Gastrocnemius medialis (tissue), 4 donors: ENCODE measurements at regions of chr14 and their contacts with region 1.

Region 1: GRCh38 chr14:101964297-101965144 is at the start of gene DYNC1H1:
- DNase-seq: peak; percentile 82 to 92
- ATAC-seq: peak; percentile 82 to 86
- H3K4me3 ChIP-seq: peak within 1 kb of the TSS; percentile 80 to 99 (median 94)
- H3K27ac ChIP-seq: peak within 1 kb of the TSS; percentile 92 to 98 (median 94)
- H3K4me1 ChIP-seq: peaks cover 38% of the 10 kb centered on the region in 2 donors
- H3K27me3 ChIP-seq: no peaks in the 10 kb centered on the region
- CTCF ChIP-seq: no peak
- POLR2A ChIP-seq: peak; percentile 99 to 100
- total RNA-seq, gene DYNC1H1: 486 to 737 (median 718) TPM

Region 2: GRCh38 chr14:101761032-101761880 is 203.3 kb before region 1 on chr14 and contains the start of gene PPP2R5C:
- in situ Hi-C with region 1: loop called in 1 of 4 experiments (anchors 25 kb)
- intact Hi-C with region 1: loop called (anchors 5 kb)
- DNase-seq: peak; percentile 91 to 92
- ATAC-seq: peak; percentile 69 to 72
- H3K4me3 ChIP-seq: peak within 1 kb of the TSS; percentile 83 to 99 (median 93)
- H3K27ac ChIP-seq: peak within 1 kb of the TSS; percentile 93 to 98 (median 96)
- H3K4me1 ChIP-seq: peaks cover 8 to 16% of the 10 kb centered on the region in 2 donors
- H3K27me3 ChIP-seq: no peaks in the 10 kb centered on the region
- CTCF ChIP-seq: no peak
- POLR2A ChIP-seq: peak; percentile 72 to 74
- total RNA-seq, gene PPP2R5C: 35.4 to 65.9 (median 49.3) TPM

Region 3: GRCh38 chr14:101905614-101906013 is 58.9 kb before region 1 on chr14:
- in situ Hi-C with region 1: no loop called
- intact Hi-C with region 1: no loop called
- DNase-seq: no peak
- ATAC-seq: no peak
- H3K4me3 ChIP-seq: no peak overlapping the region
- H3K27ac ChIP-seq: no peak overlapping the region
- H3K4me1 ChIP-seq: peaks cover 0 to 8% of the 10 kb centered on the region in 2 donors
- H3K27me3 ChIP-seq: no peaks in the 10 kb centered on the region
- CTCF ChIP-seq: no peak
- POLR2A ChIP-seq: no peak

Region 4: GRCh38 chr14:101927859-101928258 is 36.7 kb before region 1 on chr14:
- in situ Hi-C with region 1: no loop called
- intact Hi-C with region 1: loop called (anchors 1 kb)
- DNase-seq: peak; percentile 85 to 93
- ATAC-seq: peak; percentile 94
- H3K4me3 ChIP-seq: peak overlapping the region in 3 of 4 donors; percentile 20 to 38 (median 23)
- H3K27ac ChIP-seq: peak overlapping the region; percentile 77 to 84 (median 83)
- H3K4me1 ChIP-seq: peaks cover 22 to 27% of the 10 kb centered on the region in 2 donors
- H3K27me3 ChIP-seq: no peaks in the 10 kb centered on the region
- CTCF ChIP-seq: no peak
- POLR2A ChIP-seq: peak in 1 of 2 donors; percentile 29

Region 5: DNA sequence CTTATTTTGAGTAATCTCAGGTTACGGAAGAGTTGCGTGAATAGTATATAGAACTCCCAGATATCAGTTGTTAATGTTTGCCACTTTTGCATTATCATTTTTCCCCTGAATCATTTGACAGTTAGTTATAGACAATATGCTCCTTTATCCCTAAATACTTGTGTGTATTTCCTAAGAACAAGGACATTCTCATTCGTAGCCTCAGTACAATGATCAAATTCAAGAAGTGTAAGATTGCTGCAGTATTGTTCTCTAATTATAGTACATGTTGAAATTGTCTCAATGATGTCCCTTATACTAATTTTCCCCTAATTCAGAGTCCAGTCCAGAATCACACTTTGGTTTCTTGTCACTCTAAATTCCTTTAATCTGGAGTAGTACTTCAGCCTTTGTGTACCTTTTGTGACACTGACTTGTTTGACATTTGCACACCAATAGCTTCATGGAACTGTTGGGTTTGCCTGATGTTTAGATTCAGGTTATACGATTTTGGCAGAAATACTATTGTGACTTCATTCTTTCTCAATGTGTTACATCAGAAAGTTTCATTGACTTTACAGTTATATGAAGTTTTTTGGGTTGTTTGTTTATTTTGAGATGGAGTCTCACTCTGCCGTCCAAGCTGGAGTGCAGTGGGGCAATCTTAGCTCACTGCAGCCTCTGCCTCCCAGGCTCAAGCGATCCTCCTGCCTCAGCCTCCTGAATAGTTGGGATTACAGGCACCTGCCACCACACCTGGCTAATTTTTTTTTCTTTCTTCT is 13.0 kb after region 1 on chr14:
- in situ Hi-C with region 1: no loop called
- intact Hi-C with region 1: no loop called
- DNase-seq: no peak
- ATAC-seq: no peak
- H3K4me3 ChIP-seq: no peak overlapping the region
- H3K27ac ChIP-seq: no peak overlapping the region
- H3K4me1 ChIP-seq: peaks cover 27 to 30% of the 10 kb centered on the region in 2 donors
- H3K27me3 ChIP-seq: no peaks in the 10 kb centered on the region
- CTCF ChIP-seq: no peak
- POLR2A ChIP-seq: no peak

Region 6: DNA sequence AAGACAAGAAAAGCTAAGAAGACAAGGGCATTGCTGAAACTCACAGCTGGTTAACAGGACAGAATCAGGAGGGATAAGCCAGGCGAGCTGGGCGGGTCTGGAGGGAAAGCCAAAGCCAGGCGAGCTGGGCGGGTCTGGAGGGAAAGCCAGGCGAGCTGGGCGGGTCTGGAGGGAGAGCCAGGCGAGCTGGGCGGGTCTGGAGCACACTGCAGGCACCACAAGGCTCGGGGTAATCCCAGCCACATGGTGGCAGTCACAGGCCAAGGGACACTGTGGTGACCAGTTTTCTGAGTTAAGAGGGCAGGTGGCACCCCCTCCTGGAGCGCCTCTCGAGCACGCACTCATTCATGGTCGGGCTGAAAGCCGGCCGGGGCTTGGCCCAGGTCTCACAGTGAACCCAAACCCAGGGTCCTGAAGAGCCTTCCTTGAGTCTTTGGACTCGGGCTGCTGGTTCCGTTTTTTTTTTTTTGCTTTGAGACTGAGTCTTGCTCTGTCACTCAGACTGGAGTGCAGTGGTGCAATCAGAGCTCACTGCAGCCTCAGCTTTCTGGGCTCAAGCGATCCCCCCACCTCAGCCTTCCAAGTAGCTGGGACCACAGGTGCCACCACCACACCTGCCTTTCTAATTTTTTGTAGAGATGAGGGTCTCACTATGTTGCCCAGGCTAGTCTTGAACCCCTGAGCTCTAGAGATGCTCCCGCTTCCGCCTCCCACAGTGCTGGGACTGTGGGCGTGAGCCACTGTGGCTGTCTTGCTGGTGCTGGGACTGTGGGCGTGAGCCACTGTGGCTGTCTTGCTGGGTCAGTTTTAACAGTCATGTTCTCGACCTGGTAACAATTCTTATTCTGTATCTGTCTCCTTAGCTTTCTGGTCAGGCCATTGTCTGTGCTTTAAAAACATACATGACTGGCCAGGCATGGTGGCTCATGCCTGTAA is 82.1 kb after region 1 on chr14:
- in situ Hi-C with region 1: no loop called
- intact Hi-C with region 1: loop called (anchors 5 kb)
- DNase-seq: peak; percentile 79 to 93
- ATAC-seq: peak; percentile 54 to 87
- H3K4me3 ChIP-seq: no peak overlapping the region
- H3K27ac ChIP-seq: peak overlapping the region; percentile 58 to 77 (median 70)
- H3K4me1 ChIP-seq: peaks cover 36% of the 10 kb centered on the region in 2 donors
- H3K27me3 ChIP-seq: no peaks in the 10 kb centered on the region
- CTCF ChIP-seq: peak; percentile 43 to 69 (median 56)
- POLR2A ChIP-seq: no peak

Region 7: DNA sequence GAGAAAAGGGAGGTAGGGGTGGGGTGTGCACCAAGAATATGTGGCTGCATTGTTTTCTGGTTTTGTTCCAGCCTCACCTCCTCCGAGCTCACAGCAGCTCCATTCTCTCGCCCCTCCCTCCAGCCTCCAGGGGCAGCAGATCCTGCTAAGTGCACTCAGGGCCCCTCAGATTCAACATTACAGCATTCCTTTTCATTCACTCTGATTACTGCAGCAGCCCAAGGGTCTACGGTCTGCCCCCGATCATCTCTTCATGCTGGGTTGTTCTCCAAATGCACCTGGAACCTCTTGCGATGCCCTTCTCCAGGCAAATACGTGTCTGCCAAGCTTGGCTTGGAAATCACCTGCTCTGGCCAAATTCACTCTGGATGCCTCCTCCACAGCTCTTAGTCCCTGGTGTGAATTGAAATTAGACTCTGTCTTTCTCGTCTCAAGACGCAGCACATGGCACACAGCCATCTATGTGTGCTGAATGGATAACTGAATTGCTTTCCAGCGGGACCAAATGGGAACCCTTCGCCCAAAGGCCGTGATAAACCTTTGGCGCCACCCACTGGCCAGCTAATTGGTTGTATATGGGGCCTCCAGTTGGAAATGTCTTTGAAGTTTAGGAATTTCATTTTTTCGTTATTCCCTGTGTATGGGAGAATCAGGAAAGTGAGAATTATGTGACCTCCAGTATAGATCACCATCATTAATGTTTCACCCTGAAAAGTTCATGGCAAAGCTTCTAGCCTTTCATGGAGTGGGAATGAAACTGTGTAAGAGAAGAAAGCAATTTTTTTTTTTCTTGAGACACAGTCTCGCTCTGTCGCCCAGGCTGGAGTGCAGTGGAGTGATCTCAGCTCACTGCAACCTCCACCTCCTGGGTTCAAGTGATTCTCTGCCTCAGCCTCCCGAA is 131.9 kb after region 1 on chr14:
- in situ Hi-C with region 1: loop called in 3 of 4 experiments (anchors 5 to 10 kb)
- intact Hi-C with region 1: no loop called
- DNase-seq: peak; percentile 72 to 75
- ATAC-seq: peak; percentile 89
- H3K4me3 ChIP-seq: no peak overlapping the region
- H3K27ac ChIP-seq: peak overlapping the region in 1 of 4 donors; percentile 16
- H3K4me1 ChIP-seq: peaks cover 7% of the 10 kb centered on the region in 2 donors
- H3K27me3 ChIP-seq: no peaks in the 10 kb centered on the region
- CTCF ChIP-seq: peak; percentile 73 to 87 (median 77)
- POLR2A ChIP-seq: no peak